Naive thymus-derived CD8-positive, alpha-beta T cell (primary cell): ENCODE measurements at regions of chr1 and their contacts with region 1.

Region 1: GRCh38 chr1:226062558-226063223 is at the start of gene H3-3A:
- DNase-seq: peak; percentile 95 to 99 (median 98)
- ATAC-seq: peak; percentile 77 to 81
- H3K4me3 Mint-ChIP-seq: peak within 1 kb of the TSS; percentile 98 to 100 (median 100)
- H3K27ac Mint-ChIP-seq: peak within 1 kb of the TSS; percentile 98 to 100 (median 99)
- H3K4me1 Mint-ChIP-seq: peaks cover 29 to 69% (median 53%) of the 10 kb centered on the region in 4 donors
- H3K27me3 Mint-ChIP-seq: no peaks in the 10 kb centered on the region
- polyA plus RNA-seq, gene H3-3A: 736 to 904 (median 888) TPM

Region 2: DNA sequence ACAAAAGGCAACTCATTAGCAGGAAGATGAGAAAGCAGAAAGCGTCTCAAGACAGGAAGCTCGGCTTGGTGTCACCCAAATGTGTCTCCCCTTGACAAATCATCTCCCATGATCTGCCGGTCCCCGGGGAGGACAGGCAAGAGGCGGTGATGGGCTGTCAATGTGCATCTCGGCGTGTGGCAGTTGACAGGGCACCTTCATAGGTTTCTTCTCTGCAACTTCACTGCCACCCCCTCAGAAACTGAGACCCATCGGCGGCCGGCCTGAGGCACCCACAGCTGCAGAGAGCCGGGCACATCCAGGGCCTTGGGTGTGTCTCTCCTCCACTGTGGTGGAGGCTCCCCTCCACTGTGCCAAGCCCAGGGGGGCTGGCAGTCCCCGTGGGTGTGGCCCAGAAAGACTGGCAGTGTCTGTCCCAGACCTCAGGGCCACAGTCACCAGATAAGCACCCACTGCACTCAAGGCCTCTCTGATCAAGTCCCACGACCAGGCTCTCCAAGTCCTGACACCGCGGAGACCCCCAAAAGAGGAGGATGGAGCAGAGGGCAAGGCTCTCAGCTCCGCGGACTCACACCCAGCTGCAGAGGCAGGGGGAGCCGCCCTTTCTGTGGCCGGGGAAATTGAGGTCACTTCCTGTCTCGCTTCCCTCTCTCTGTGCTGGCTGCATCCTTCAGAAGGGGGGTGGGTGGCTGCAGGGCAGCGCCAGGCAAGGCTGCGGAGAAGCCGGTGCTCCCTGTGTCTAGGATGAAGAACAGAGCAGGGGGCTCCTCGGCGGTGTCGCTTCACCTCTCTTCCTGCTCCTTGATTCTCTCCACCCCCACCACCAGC is 595.3 kb before region 1 on chr1:
- POLR2A ChIA-PET with region 1: interaction called, 23 read pairs
- DNase-seq: peak; percentile 58 to 90 (median 82)
- ATAC-seq: peak; percentile 85 to 86
- H3K4me3 Mint-ChIP-seq: peak overlapping the region; percentile 89 to 97 (median 92)
- H3K27ac Mint-ChIP-seq: peak overlapping the region; percentile 92 to 99 (median 98)
- H3K4me1 Mint-ChIP-seq: peaks cover 19 to 56% (median 50%) of the 10 kb centered on the region in 4 donors
- H3K27me3 Mint-ChIP-seq: no peaks in the 10 kb centered on the region

Region 3: GRCh38 chr1:225896937-225897549 is 165.6 kb before region 1 on chr1:
- POLR2A ChIA-PET with region 1: interaction called, 10 read pairs
- DNase-seq: peak; percentile 21 to 92 (median 80)
- ATAC-seq: peak; percentile 88 to 92
- H3K4me3 Mint-ChIP-seq: peak overlapping the region; percentile 59 to 89 (median 82)
- H3K27ac Mint-ChIP-seq: peak overlapping the region; percentile 94 to 100 (median 97)
- H3K4me1 Mint-ChIP-seq: peaks cover 27 to 64% (median 60%) of the 10 kb centered on the region in 4 donors
- H3K27me3 Mint-ChIP-seq: no peaks in the 10 kb centered on the region

Region 4: GRCh38 chr1:225999227-225999911 is 63.3 kb before region 1 on chr1 and contains the start of gene SDE2:
- POLR2A ChIA-PET with region 1: interaction called, 547 read pairs
- DNase-seq: peak; percentile 98 to 100 (median 100)
- ATAC-seq: peak; percentile 66 to 73
- H3K4me3 Mint-ChIP-seq: peak within 1 kb of the TSS; percentile 88 to 100 (median 100)
- H3K27ac Mint-ChIP-seq: peak within 1 kb of the TSS; percentile 97 to 100 (median 100)
- H3K4me1 Mint-ChIP-seq: peaks cover 41 to 89% (median 78%) of the 10 kb centered on the region in 4 donors
- H3K27me3 Mint-ChIP-seq: peaks cover 0 to 3% (median 0%) of the 10 kb centered on the region in 5 donors
- polyA plus RNA-seq, gene SDE2: 5.1 to 12.0 (median 7.2) TPM

Region 5: DNA sequence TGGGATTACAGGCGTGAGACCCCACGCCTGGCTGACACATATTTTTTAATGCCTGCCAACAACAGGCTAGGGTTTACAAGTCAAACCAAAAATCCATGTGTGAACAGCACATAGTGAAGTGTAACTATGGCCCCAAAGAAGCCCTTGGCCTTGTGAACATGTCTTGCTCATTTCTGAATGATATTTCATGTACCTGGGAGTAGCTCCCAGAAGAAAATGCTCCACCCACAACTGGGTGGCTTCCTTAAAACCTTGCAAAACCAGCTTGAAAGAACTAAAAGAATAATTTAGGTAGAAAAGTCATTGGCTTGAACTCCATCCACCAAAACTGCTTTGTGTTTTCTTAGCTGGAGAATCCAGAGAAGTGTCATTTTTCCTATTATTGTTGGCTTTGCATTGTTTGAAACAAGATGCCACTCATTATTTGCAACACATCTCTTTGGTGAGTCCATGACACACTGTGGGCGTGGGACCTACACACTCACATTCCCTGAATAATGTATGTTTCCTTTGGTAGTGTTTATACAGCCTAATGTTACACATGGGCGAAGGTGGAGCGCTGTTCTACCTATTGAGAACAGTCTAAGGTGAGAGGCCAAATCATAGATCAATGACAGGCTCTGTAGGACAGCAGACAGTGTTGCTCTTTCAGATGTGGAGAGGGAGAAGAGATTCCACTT is 35.0 kb before region 1 on chr1:
- POLR2A ChIA-PET with region 1: no interaction called
- DNase-seq: no peak
- ATAC-seq: no peak
- H3K4me3 Mint-ChIP-seq: no peak overlapping the region
- H3K27ac Mint-ChIP-seq: no peak overlapping the region
- H3K4me1 Mint-ChIP-seq: peaks cover 0 to 37% (median 0%) of the 10 kb centered on the region in 4 donors
- H3K27me3 Mint-ChIP-seq: no peaks in the 10 kb centered on the region

Region 6: DNA sequence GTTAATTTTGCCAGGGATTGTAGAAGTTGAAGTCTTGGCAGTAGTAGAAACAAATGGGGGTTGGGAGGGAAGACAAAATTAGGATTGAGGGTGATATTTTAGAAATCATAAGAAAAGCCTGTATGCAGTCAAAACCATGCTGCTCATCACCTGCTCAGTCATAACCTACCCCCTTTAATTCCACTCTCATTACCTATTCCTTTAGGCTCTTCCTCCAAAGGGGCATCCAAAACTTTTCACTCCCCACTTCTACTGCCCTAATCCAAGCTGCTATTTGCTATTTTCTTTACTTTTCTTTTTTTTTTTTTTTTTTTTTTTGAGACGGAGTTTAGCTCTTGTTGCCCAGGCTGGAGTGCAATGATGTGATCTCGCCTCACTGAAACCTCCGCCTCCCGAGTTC is 11.4 kb after region 1 on chr1:
- POLR2A ChIA-PET with region 1: interaction called, 26 read pairs
- DNase-seq: no peak
- ATAC-seq: peak; percentile 30 to 36
- H3K4me3 Mint-ChIP-seq: no peak overlapping the region
- H3K27ac Mint-ChIP-seq: peak overlapping the region in 8 of 10 donors; percentile 14 to 84 (median 69)
- H3K4me1 Mint-ChIP-seq: peaks cover 9 to 32% (median 30%) of the 10 kb centered on the region in 4 donors
- H3K27me3 Mint-ChIP-seq: no peaks in the 10 kb centered on the region

Region 7: GRCh38 chr1:226109829-226110248 is 47.1 kb after region 1 on chr1:
- POLR2A ChIA-PET with region 1: interaction called, 46 read pairs
- DNase-seq: peak; percentile 41 to 86 (median 74)
- ATAC-seq: peak; percentile 81 to 82
- H3K4me3 Mint-ChIP-seq: peak overlapping the region; percentile 87 to 96 (median 92)
- H3K27ac Mint-ChIP-seq: peak overlapping the region; percentile 79 to 96 (median 90)
- H3K4me1 Mint-ChIP-seq: peaks cover 15 to 34% (median 25%) of the 10 kb centered on the region in 4 donors
- H3K27me3 Mint-ChIP-seq: no peaks in the 10 kb centered on the region